ENCODE measurements at regions of chr6 and their contacts with region 1.

Region 1: DNA sequence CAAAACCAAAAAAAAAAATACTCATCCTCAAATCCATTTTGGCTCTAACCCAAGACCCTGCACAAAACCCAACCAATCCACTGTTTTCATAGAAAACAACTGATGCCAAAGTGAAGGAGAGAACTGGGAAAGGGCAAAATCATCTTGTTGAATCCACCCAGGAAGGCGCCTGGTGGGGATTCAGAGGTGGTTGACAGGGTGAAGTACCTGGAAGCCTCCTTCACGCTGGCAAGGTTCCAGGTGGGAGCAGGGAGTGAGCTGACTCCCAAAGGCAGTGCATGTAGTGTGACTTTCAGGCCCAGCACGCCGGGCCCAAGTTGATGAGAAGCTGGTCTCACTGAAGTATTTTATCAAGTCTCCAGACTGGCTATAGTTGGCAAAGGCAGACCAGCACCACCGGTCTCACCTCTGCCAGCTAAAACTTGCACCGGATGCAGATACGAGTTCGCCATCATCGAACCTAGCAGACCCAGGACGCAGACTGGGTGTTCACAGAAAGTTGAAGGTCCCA is 16.5 kb downstream of the PPP1R10 start:
- DNase-seq: no peak
- ATAC-seq: no peak
- H3K4me3 ChIP-seq: no peak overlapping the region
- H3K4me3 Mint-ChIP-seq: no peak overlapping the region
- H3K27ac ChIP-seq: no peak overlapping the region
- H3K27ac Mint-ChIP-seq: no peak overlapping the region
- H3K4me1 ChIP-seq: peaks cover 0 to 6% of the 10 kb centered on the region in 2 donors
- H3K4me1 Mint-ChIP-seq: peaks cover 6% of the 10 kb centered on the region
- H3K27me3 ChIP-seq: no peaks in the 10 kb centered on the region
- H3K27me3 Mint-ChIP-seq: no peaks in the 10 kb centered on the region
- CTCF ChIP-seq: no peak

Region 2: GRCh38 chr6:30463651-30464618 is 136.6 kb before region 1 on chr6:
- CTCF ChIA-PET with region 1: interaction called, 11 read pairs
- POLR2A ChIA-PET with region 1: no interaction called
- intact Hi-C with region 1: no loop called
- DNase-seq: peak; percentile 71
- ATAC-seq: peak; percentile 58
- H3K4me3 ChIP-seq: peak overlapping the region in 4 of 5 experiments; percentile 8 to 41 (median 30)
- H3K4me3 Mint-ChIP-seq: peak overlapping the region; percentile 65
- H3K27ac ChIP-seq: no peak overlapping the region
- H3K27ac Mint-ChIP-seq: no peak overlapping the region
- H3K4me1 ChIP-seq: peaks cover 42% of the 10 kb centered on the region in 2 donors
- H3K4me1 Mint-ChIP-seq: peaks cover 43% of the 10 kb centered on the region
- H3K27me3 ChIP-seq: peaks cover 0 to 90% (median 77%) of the 10 kb centered on the region in 4 experiments
- H3K27me3 Mint-ChIP-seq: peaks cover 74% of the 10 kb centered on the region
- CTCF ChIP-seq: no peak

Region 3: DNA sequence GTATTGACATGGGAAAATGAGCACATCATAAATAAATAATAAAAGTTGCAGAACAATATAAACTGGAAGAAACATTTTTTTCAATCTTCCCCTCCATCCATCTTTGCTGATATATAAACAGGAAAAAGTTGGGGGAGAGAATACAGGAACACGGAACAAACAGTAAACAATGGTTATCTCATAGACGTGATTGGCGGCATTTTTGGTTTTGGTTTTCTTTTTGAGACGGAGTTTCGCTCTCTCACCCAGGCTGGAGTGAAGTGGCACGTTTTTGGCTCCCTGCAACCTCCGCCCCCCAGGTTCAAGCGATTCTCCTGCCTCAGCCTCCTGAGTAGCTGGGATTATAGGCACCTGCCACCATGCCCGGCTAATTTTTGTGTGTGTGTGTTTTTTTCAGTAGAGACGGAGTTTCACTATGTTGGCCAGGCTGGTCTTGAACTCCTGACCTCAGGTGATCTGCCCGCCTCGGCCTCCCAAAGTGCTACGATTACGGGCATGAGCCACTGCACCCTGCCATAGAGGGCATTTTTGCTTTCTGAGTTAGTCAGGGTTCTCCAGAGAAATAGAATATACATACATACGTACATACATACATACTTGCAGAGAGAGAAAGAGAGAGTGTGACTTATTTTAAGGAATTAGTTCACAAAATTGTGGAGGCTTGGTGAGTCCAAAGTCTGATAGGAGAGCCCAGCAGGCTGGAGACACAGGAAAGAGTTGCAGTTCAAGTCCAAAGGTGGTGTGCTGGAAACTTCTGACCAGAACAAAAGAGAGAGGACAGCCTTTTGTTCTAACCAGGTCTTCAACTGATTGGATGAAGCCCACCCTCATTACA is 66.8 kb before region 1 on chr6:
- CTCF ChIA-PET with region 1: interaction called, 12 read pairs
- POLR2A ChIA-PET with region 1: no interaction called
- intact Hi-C with region 1: no loop called
- DNase-seq: no peak
- ATAC-seq: no peak
- H3K4me3 ChIP-seq: no peak overlapping the region
- H3K4me3 Mint-ChIP-seq: peak overlapping the region; percentile 59
- H3K27ac ChIP-seq: no peak overlapping the region
- H3K27ac Mint-ChIP-seq: peak overlapping the region; percentile 50
- H3K4me1 ChIP-seq: peaks cover 28 to 38% of the 10 kb centered on the region in 2 donors
- H3K4me1 Mint-ChIP-seq: peaks cover 26% of the 10 kb centered on the region
- H3K27me3 ChIP-seq: no peaks in the 10 kb centered on the region
- H3K27me3 Mint-ChIP-seq: no peaks in the 10 kb centered on the region
- CTCF ChIP-seq: no peak

Region 4: GRCh38 chr6:30578051-30578450 is 22.5 kb before region 1 on chr6:
- CTCF ChIA-PET with region 1: interaction called, 22 read pairs
- POLR2A ChIA-PET with region 1: interaction called, 9 read pairs
- intact Hi-C with region 1: no loop called
- DNase-seq: no peak
- ATAC-seq: no peak
- H3K4me3 ChIP-seq: no peak overlapping the region
- H3K4me3 Mint-ChIP-seq: no peak overlapping the region
- H3K27ac ChIP-seq: no peak overlapping the region
- H3K27ac Mint-ChIP-seq: no peak overlapping the region
- H3K4me1 ChIP-seq: peaks cover 6 to 8% of the 10 kb centered on the region in 2 donors
- H3K4me1 Mint-ChIP-seq: peaks cover 22% of the 10 kb centered on the region
- H3K27me3 ChIP-seq: no peaks in the 10 kb centered on the region
- H3K27me3 Mint-ChIP-seq: no peaks in the 10 kb centered on the region
- CTCF ChIP-seq: no peak

Region 5: GRCh38 chr6:30611150-30611855 is 10.8 kb after region 1 on chr6:
- CTCF ChIA-PET with region 1: interaction called, 16 read pairs
- POLR2A ChIA-PET with region 1: interaction called, 9 read pairs
- intact Hi-C with region 1: loop called (anchors 2 kb)
- DNase-seq: no peak
- ATAC-seq: no peak
- H3K4me3 ChIP-seq: no peak overlapping the region
- H3K4me3 Mint-ChIP-seq: no peak overlapping the region
- H3K27ac ChIP-seq: peak overlapping the region in 1 of 2 donors; percentile 99
- H3K27ac Mint-ChIP-seq: peak overlapping the region; percentile 71
- H3K4me1 ChIP-seq: peaks cover 33 to 35% of the 10 kb centered on the region in 2 donors
- H3K4me1 Mint-ChIP-seq: peaks cover 67% of the 10 kb centered on the region
- H3K27me3 ChIP-seq: no peaks in the 10 kb centered on the region
- H3K27me3 Mint-ChIP-seq: no peaks in the 10 kb centered on the region
- CTCF ChIP-seq: no peak